ENCODE measurements at regions of chr20 and their contacts with region 1.

Region 1: DNA sequence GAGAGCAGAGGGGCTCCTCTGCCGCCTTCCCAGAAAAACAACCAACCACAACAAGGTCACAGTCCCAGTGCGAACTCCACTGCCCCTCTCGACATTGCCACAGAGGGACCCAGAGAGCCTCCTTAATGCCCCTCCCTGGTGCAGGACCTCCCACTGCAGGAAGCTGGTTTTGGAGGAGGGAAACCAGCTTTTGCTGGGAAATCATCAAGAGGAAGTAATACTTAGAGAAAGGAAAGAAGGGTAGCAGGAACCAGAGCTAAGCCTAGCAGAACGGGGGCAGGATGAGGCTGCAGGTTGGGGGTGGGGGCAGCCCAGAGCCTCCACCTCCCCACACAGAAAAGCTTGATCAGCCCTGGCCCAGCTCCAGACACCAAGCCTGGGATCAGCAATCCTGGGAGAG is 37.7 kb upstream of the SIRPA start:
- DNase-seq: no peak
- ATAC-seq: peak; percentile 34; the same call in 2 of the 3 replicates
- H3K4me3 ChIP-seq: no peak overlapping the region
- H3K27ac ChIP-seq: no peak overlapping the region
- H3K4me1 ChIP-seq: peaks cover 67% of the 10 kb centered on the region
- H3K27me3 ChIP-seq: no peaks in the 10 kb centered on the region
- CTCF ChIP-seq: no peak
- EP300 ChIP-seq: no peak
- POLR2A ChIP-seq: no peak
- RAD21 ChIP-seq: no peak

Region 2: DNA sequence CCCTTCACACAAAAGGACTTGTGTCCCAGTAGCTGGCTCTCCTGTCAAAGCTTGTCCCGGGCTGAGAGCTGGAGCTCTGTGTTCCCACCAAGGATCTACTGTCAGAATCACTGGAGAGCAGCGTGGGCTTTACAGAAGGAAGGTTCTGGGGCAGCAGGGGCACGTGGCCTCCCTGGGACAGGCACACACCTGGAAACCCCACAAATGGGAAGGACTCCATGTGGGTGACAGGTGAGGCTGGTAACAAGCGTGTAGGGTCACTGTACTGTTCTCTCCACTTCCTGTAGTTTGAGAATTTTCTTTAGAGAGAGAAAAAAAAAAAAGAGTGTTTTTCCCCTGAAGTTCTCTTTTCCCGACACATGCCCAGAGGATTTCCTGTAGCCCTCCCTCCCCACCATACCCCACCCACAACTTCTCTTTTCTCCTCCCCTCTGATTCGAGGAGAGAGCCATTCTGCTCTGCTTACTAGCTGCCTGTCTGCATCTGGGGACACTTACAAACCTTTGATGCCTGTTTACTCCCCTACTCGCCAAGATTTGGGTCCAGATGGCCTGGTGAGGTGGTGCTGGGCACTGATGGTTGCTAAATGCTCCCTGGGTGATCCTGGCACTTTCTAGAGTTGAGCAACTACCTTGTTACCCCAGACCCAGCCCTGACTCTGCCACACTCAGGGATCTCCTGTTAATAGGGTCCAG is 46.4 kb before region 1 on chr20:
- CTCF ChIA-PET with region 1: no interaction called
- POLR2A ChIA-PET with region 1: no interaction called
- in situ Hi-C with region 1: no loop called
- intact Hi-C with region 1: loop called (anchors 1 kb)
- DNase-seq: peak; percentile 61
- ATAC-seq: peak; percentile 40
- H3K4me3 ChIP-seq: peak overlapping the region in 1 of 3 experiments; percentile 47; a peak in 2 of 6 replicates
- H3K27ac ChIP-seq: peak overlapping the region; percentile 74
- H3K4me1 ChIP-seq: peaks cover 47% of the 10 kb centered on the region
- H3K27me3 ChIP-seq: no peaks in the 10 kb centered on the region
- CTCF ChIP-seq: no peak
- EP300 ChIP-seq: no peak
- POLR2A ChIP-seq: no peak
- RAD21 ChIP-seq: no peak

Region 3: DNA sequence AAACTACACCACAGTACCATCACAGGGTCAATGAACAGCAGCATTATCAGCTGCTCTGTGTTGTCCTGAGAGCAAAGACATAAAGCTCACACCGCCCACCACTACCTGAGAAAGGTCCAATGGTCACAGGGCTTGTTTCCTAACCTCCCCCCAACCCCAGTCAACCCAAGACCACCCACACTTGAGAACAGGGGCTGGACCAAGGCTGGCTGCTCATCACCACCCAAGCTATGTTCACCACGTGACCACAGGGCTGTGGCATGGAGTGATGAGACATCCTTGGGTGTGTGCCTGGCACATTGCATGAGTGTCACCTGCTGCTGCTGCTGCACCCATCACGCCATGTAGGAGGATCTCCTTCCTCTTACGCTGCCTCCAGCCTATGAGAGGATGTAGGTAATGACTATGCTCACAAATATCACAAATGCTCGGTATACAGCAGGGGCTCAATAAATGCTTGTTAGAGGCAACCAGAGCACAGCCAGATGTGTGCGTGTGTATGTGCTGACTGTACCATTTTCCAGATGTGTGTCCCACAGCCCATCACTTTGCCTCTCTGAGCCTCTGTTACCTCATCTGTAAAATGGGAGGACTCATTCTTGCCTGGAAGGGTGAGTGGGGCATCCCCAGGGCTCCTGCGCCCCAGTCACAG is 14.5 kb after region 1 on chr20:
- CTCF ChIA-PET with region 1: no interaction called
- POLR2A ChIA-PET with region 1: interaction called, 10 read pairs
- in situ Hi-C with region 1: no loop called
- intact Hi-C with region 1: loop called (anchors 1 kb)
- DNase-seq: no peak
- ATAC-seq: no peak
- H3K4me3 ChIP-seq: no peak overlapping the region
- H3K27ac ChIP-seq: no peak overlapping the region
- H3K4me1 ChIP-seq: peaks cover 69% of the 10 kb centered on the region
- H3K27me3 ChIP-seq: no peaks in the 10 kb centered on the region
- CTCF ChIP-seq: no peak
- EP300 ChIP-seq: no peak
- POLR2A ChIP-seq: no peak
- RAD21 ChIP-seq: no peak

Region 4: GRCh38 chr20:1946762-1947534 is 89.5 kb after region 1 on chr20:
- CTCF ChIA-PET with region 1: no interaction called
- POLR2A ChIA-PET with region 1: no interaction called
- in situ Hi-C with region 1: no loop called
- intact Hi-C with region 1: no loop called
- DNase-seq: peak; percentile 70
- ATAC-seq: peak; percentile 61
- H3K4me3 ChIP-seq: peak overlapping the region in 2 of 3 experiments; percentile 25 to 49; a peak in 3 of 6 replicates
- H3K27ac ChIP-seq: no peak overlapping the region
- H3K4me1 ChIP-seq: peaks cover 42% of the 10 kb centered on the region
- H3K27me3 ChIP-seq: peaks cover 15 to 47% of the 10 kb centered on the region in 2 experiments; a peak in 4 of 5 replicates
- CTCF ChIP-seq: no peak
- EP300 ChIP-seq: no peak
- POLR2A ChIP-seq: no peak
- RAD21 ChIP-seq: no peak